ENCODE measurements at regions of chr2 and their contacts with region 1.

Region 1: DNA sequence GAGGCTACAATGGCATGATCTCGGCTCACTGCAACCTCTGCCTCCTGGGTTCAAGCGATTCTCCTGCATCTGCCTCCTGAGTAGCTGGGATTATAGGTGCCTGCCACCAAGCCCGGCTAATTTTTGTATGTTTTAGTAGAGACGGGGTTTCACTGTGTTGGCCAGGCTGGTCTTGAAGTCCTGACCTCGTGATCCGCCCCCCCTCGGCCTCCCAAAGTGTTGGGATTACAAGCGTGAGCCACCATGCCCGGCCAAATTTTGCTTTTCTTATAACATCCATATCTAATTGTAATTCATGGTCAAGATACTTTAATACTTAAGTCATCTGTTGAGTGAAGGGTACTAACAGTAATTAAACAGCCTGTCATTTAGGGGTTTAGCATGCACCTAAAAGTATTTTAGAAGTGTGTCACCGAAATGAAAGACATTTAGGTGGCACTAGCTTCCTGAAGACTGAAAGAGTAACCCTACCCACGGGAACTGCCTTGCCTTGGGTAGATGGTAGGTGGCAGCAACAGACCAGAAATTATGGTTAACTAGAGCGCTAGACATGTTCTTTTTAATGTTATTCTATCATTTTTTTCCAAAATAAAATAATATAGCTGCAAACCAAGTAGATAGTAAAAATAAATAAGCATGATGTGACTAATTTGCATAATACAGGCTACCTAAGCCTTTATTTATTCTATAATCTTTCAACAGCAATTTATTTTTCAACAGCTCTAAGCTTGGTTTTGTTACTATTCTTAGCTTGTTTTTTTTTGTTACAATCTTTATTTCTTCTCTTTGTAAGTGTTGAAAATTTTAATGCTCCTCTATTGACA is 8.6 kb upstream of the ACYP2 start:
- DNase-seq: peak; percentile 43
- H3K4me3 ChIP-seq: no peak overlapping the region
- H3K27ac ChIP-seq: no peak overlapping the region
- H3K4me1 ChIP-seq: peaks cover 33% of the 10 kb centered on the region
- H3K27me3 ChIP-seq: no peaks in the 10 kb centered on the region
- CTCF ChIP-seq: peak; percentile 84 to 90

Region 2: GRCh38 chr2:54052825-54053718 is 53.8 kb before region 1 on chr2:
- CTCF ChIA-PET with region 1: interaction called, 3 read pairs
- dilution Hi-C with region 1: no loop called
- in situ Hi-C with region 1: no loop called
- intact Hi-C with region 1: loop called (anchors 2 kb)
- DNase-seq: peak; percentile 42
- H3K4me3 ChIP-seq: no peak overlapping the region
- H3K27ac ChIP-seq: no peak overlapping the region
- H3K4me1 ChIP-seq: peaks cover 8% of the 10 kb centered on the region
- H3K27me3 ChIP-seq: no peaks in the 10 kb centered on the region
- CTCF ChIP-seq: peak; percentile 36 to 45

Region 3: DNA sequence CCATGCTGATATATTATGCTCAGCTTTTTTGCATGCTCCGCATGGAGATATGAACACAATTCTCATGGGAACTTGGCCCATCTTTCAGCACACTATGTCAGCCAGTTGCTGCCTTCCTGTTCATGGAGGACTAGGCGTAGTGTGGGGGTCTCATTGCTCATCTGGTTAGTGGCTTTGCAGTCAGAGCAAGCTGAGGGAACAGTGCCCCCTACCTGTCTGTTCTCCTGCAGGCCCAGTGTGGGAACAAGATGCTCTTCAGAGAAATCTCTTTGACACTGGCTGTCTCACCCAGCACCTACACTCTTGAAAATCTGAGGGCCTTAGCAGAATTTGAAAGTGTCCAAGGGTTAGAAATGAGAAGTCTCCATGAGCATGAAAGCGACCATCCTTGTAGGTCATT is 396.3 kb after region 1 on chr2:
- CTCF ChIA-PET with region 1: interaction called, 3 read pairs
- dilution Hi-C with region 1: no loop called
- in situ Hi-C with region 1: loop called in 1 of 2 experiments (anchors 25 kb)
- intact Hi-C with region 1: loop called (anchors 1 kb)
- DNase-seq: no peak
- H3K4me3 ChIP-seq: no peak overlapping the region
- H3K27ac ChIP-seq: no peak overlapping the region
- H3K4me1 ChIP-seq: no peaks in the 10 kb centered on the region
- H3K27me3 ChIP-seq: no peaks in the 10 kb centered on the region
- CTCF ChIP-seq: peak; percentile 53 to 76

Region 4: GRCh38 chr2:54652540-54652939 is 545.7 kb after region 1 on chr2:
- CTCF ChIA-PET with region 1: no interaction called
- dilution Hi-C with region 1: no loop called
- in situ Hi-C with region 1: no loop called
- intact Hi-C with region 1: loop called (anchors 5 kb)
- DNase-seq: peak; percentile 52
- H3K4me3 ChIP-seq: no peak overlapping the region
- H3K27ac ChIP-seq: no peak overlapping the region
- H3K4me1 ChIP-seq: no peaks in the 10 kb centered on the region
- H3K27me3 ChIP-seq: no peaks in the 10 kb centered on the region
- CTCF ChIP-seq: no peak

Region 5: DNA sequence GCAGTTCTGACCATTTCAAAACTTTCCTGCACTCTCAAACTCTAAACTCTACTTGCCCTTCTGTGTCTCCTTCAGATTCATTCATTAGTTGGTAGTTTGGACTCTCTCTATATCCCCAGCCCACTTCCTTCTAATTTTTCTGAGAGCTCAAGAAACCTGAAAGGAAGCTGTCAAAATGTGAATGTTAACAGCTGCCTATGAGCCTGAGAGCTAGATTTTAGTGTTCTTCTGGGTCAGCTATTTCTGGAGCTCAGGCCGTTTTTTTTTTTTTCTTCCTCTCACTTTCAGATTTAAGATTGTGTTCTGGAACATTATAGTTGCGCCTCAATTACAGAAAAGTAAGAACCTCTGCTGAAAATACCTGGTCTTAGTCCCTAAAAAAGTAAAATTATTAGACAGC is 870.3 kb after region 1 on chr2:
- CTCF ChIA-PET with region 1: no interaction called
- dilution Hi-C with region 1: no loop called
- in situ Hi-C with region 1: no loop called
- intact Hi-C with region 1: no loop called
- DNase-seq: no peak
- H3K4me3 ChIP-seq: no peak overlapping the region
- H3K27ac ChIP-seq: no peak overlapping the region
- H3K4me1 ChIP-seq: peaks cover 14% of the 10 kb centered on the region
- H3K27me3 ChIP-seq: no peaks in the 10 kb centered on the region
- CTCF ChIP-seq: no peak